Left cardiac atrium (tissue), 4 donors: ENCODE measurements at regions of chr17 and their contacts with region 1.

Region 1: DNA sequence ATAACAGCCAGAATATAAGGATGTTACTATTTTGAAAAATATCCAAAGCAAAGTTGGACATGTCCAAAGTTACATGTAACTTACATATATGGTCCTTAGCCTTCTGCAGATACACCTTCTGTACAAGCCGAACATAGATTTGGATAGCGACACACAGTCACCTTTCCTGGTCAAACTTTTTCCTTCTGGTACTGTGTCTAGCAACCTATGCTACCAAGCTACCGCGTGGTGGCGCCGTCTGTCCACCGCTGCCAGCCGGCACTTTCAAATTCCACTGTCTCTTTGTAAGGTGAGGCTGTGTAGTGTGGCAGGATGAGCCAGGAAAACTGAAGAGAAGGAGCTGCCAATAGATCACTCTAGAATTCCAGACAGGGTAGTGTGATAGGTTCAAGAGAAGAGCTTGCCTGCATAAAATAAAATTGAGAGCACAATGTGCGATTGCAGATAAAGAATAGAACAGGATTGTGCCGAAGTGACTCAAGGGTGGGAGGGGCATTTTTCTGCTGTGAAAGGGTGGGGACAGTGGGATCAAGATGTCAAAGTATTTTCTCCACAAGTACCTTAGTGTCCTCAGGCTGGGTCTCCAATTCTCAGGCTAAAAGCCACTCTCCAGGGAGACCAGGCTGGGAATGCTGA is 366.9 kb downstream of the SLC39A11 start:
- DNase-seq: peak; percentile 52
- ATAC-seq: peak; percentile 77 to 80

Region 2: GRCh38 chr17:72556944-72557826 is 168.4 kb before region 1 on chr17:
- intact Hi-C with region 1: loop called in 1 of 2 experiments (anchors 10 kb)
- DNase-seq: peak; percentile 65
- ATAC-seq: peak; percentile 45 to 52

Region 3: DNA sequence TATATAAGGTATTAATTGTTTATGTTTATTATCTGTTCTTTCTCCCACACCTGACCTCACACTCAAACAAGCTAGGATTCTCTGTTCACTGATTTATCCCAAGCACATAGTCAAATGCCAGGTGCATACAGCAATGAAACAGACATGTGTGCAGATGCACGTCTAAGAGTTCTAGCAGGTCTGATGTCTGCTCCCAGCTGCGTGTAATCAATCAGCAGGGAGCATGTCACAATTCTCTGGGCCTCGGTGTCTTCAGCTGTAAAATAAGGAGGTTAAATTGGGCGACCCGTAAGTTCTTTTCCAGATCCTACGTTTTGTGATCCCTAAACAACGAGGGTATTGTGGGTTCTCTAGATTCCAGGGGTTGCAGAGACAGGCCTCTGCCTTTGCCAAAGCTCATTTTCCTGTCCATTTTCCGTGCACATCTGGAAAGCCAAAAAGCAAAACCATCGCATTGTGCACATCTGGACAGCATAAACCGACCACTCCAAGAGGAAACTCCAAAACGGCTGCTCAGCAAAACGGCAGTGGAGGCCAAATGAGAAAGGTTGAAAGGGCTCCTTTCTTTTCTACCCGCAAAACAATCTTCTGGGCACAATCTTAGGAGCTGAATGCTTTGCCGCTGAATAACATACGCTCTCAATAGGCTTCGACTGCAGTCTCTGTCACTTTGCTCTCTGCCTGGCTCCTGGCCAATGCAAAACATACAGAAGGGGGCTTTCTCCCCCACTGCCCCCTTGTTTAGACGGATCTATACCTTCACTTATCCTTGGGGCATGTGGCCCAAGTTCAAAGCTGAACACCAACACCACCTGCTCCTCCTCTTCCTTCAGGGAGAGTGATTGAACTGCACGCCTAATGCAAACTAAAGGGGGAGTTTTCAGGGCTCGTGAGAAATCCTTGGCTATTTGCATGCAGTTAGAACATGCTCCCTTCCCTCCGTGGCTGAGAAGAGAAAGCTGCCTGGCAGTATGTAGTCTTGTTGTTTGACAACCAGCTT is 59.4 kb before region 1 on chr17:
- intact Hi-C with region 1: no loop called
- DNase-seq: no peak
- ATAC-seq: no peak

Region 4: GRCh38 chr17:73156166-73156840 is 430.8 kb after region 1 on chr17:
- intact Hi-C with region 1: loop called in 1 of 2 experiments (anchors 5 kb)
- DNase-seq: peak; percentile 76
- ATAC-seq: peak; percentile 95

Region 5: DNA sequence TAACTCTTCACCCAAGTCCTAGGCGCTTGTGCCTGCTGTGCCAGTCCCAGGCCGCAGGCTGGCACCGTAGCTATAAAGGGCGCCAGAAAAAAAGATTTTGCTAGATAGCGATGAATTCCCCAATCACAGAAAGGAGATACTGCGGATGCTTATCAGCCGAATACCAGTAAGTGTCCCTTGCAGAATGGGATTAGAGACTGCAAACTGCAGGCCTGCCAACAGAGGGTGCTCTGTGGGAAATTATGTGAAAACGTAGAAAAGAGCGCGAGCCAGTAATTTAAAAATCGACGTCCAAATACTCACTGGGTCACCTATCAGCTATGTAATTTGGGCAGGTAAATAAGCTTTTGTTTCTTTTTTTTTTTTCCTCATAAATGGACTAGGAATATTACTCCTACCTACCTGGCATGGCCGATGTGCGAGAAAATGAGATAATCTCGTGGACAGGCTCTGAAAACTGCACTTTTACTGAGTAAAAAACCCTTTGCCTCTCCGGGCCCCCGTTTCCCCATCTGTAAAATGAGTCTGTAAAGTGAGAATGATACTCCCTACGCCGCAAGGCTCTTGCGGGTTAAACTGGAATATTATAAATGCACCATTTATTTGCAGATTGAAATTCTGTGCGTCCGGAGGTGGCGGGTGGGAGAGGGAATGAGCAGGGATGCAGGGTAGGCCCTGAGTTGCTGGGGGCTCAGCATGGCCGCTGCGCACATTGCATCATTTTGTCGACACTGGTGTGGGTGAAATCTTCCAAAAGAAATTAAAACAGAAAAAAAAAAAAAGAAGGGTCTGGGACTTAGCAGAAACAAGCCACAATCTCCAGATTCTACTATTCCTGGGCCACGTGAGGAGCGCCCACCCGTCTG is 466.1 kb after region 1 on chr17:
- intact Hi-C with region 1: loop called (anchors 2 to 10 kb)
- DNase-seq: peak; percentile 71
- ATAC-seq: peak; percentile 10 to 35

Region 6: DNA sequence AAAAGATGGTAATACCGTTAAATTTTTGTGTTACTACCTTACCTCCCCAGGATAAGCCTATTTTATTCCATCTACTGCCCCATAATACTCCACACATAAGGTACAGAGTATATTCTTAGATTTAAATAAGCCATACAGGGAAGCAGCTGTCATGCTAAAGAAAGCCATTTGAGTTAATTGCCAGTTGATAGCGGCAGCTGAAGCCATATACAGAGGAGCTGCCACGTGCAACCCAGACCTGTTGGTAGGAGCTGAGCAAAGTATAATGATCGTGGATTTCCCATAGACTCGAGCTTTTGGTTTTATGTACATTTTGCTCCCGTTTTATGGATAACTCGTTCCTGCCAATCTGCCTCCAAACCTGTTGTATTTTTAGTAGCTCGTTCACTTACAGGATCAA is 524.1 kb after region 1 on chr17:
- intact Hi-C with region 1: loop called in 1 of 2 experiments (anchors 5 kb)
- DNase-seq: no peak
- ATAC-seq: no peak

Region 7: GRCh38 chr17:73371285-73371684 is 645.7 kb after region 1 on chr17:
- intact Hi-C with region 1: loop called in 1 of 2 experiments (anchors 10 kb)
- DNase-seq: no peak
- ATAC-seq: no peak